ENCODE measurements at regions of chr11 and their contacts with region 1.

Region 1: GRCh38 chr11:44780940-44781631 is 54.3 kb downstream of the TSPAN18 start:
- DNase-seq: peak; percentile 80
- ATAC-seq: peak; percentile 90

Region 2: DNA sequence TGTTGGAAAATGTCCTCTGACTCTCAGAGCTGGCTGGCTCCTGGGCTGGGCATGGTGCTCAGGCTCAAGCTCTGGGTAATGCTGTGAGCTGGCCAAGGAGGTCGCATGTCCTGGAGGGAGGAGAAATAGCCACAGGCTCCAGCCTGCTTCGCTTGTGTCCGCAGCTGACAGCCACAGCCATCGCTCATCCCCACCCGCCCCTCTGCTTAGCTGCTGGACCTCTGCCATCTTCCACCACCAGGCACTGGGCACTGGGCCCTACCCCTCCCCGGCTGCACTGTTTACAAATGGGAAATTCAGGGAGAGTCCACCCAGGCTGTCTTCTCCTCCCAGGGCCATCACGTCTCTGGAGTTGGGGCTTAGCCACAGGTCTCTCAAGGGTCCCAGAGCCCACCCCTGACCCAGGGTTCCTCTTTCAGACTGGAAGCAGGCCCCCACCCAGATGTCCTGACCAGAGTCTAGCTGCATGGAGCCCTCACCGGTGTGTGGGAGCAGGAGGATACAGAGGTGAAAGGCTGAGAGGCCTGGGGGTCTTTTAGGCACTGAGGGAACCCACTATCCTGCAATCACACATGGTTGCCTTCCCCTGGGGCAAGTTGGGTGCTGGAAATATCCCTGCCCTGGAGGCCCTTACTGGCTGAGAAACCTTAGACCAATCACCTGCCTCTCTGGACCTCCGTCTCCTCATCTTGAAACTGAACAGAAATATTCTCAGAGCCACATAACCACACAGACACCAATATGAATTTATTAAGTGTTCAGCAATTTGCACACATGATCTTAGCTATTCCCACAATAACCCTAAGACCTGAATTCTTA is 153.0 kb before region 1 on chr11:
- intact Hi-C with region 1: loop called (anchors 5 kb)
- DNase-seq: peak; percentile 82
- ATAC-seq: peak; percentile 86

Region 3: GRCh38 chr11:44814881-44815592 is 34.0 kb after region 1 on chr11:
- intact Hi-C with region 1: loop called (anchors 5 kb)
- DNase-seq: no peak
- ATAC-seq: no peak